ENCODE measurements at regions of chr2 and their contacts with region 1.

Region 1: GRCh38 chr2:105682401-105682800 is 62.3 kb upstream of the NCK2 start:
- DNase-seq: no peak
- ATAC-seq: no peak
- H3K4me3 ChIP-seq: no peak overlapping the region
- H3K27ac ChIP-seq: no peak overlapping the region
- H3K4me1 ChIP-seq: no peaks in the 10 kb centered on the region
- H3K27me3 ChIP-seq: no peaks in the 10 kb centered on the region
- CTCF ChIP-seq: no peak

Region 2: DNA sequence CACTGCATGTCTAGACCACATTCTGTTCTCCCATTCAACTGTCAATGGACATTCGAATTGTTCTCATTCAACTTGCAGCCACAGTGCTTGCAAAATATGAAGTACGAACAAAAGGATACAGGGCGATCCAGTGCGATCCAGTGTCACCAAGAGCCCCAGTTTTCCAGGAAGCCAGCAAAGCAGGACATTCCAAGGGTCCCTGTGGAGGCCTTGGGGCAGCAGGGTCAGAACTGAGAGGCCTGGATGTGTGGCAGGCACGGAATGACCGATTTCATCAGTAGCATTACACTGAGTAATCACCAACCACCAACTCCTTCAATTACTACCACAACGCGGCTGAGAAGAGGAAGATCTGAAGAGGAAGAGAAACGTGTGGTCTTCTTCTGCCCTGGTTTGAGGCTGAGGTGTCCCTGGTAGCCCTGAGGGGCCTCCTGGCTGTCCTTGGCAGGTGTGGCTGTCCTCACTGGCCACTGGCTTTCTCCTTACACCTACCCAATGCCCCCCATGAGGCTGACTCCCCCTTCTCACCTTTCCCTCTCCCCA is 110.9 kb before region 1 on chr2:
- intact Hi-C with region 1: no loop called
- DNase-seq: no peak
- ATAC-seq: no peak
- H3K4me3 ChIP-seq: no peak overlapping the region
- H3K27ac ChIP-seq: no peak overlapping the region
- H3K4me1 ChIP-seq: no peaks in the 10 kb centered on the region
- H3K27me3 ChIP-seq: no peaks in the 10 kb centered on the region
- CTCF ChIP-seq: no peak

Region 3: GRCh38 chr2:105595536-105595935 is 86.9 kb before region 1 on chr2:
- intact Hi-C with region 1: loop called in 1 of 2 experiments (anchors 10 kb)
- DNase-seq: no peak
- ATAC-seq: no peak
- H3K4me3 ChIP-seq: no peak overlapping the region
- H3K27ac ChIP-seq: no peak overlapping the region
- H3K4me1 ChIP-seq: no peaks in the 10 kb centered on the region
- H3K27me3 ChIP-seq: no peaks in the 10 kb centered on the region
- CTCF ChIP-seq: no peak

Region 4: GRCh38 chr2:105734762-105735538 is 52.5 kb after region 1 on chr2:
- intact Hi-C with region 1: no loop called
- DNase-seq: no peak
- ATAC-seq: no peak
- H3K4me3 ChIP-seq: no peak overlapping the region
- H3K27ac ChIP-seq: no peak overlapping the region
- H3K4me1 ChIP-seq: no peaks in the 10 kb centered on the region
- H3K27me3 ChIP-seq: no peaks in the 10 kb centered on the region
- CTCF ChIP-seq: no peak

Measured in psoas muscle (tissue), 8 donors.